GM18951 (cell line): ENCODE measurements at regions of chrX and their contacts with region 1.

Region 1: DNA sequence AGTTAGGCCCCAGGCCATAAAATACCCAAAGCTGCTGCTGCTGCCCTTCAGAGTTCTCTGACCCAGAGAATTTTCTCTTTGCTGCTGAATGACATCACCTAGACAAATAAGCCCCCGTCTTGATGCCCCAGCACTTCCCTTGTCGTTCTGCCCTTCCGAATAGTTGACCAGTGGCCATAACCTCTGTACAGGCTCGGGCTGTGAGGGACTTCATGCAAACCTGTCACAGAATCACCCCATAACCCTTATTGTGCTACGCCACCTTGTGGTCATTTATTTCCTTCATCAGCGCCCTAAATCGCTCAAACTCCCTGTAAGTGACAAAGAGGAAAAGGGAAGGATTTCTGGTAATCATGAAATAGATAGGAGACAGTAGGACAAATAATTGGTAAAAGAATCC is 18.8 kb downstream of the SPACA5 start:
- POLR2A ChIP-seq: no peak

Region 2: DNA sequence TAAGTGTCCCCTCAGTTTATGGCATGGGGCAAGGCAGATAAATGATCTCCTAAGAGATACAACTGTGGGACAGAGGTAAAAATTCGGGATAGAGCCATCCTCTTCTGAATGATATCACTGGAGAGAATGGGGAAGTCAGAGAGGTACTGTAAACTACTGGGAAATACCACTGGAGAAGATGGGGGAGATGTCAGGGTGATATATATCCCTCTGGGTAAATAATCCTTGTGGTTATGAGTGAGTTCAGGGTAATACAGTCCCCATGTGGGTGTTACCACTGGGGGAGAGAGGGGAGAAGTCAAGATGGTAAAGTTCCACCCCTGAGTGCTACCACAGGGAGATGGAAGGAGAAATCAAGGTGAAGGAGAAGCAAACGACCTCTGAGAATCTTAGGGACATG is 252.8 kb before region 1 on chrX:
- in situ Hi-C with region 1: no loop called
- POLR2A ChIP-seq: no peak

Region 3: DNA sequence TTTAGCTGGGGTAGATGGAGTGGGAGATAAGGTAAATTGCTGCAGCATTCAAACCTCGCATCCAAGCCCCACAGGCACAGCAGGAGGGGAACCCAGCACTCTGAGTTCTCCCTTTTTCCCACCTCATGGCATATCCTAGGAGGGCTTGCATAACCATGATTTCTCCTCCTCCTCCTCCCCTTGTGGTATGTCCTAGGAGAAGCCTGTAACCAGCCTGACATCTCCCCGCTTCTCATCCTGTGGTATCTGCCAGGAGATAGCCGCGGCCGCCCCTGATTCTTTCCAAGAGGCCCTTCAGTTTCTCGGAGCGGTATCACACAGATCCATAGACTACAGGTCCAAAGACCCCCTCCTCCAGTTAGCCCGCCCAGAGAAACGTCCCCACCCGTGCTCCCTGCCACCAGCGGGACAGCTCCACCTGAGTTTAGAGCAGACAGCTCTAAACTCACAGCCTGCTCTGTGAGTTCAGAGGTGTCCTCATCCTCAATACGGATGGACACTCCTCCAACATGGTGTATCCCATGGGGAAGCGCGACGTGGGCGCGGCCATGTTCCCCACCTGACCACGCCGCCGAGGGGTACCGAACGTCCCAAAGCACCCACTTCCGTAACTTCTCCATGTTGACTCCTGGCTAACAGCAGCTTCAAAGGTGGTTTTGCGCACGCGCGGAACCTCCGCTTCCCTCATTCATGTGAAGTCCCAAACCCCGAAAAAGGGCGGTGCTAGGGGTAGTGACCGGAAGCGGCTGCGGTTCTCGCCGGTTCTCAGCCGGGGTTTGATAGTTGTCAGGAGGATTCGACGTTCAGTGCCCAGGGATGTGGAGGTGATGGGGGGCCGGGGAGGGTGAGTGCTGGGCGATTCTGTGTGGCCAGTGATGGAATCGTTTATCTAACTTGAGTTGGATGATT is 189.1 kb before region 1 on chrX and contains the start of gene ZNF81:
- in situ Hi-C with region 1: loop called (anchors 25 kb)
- POLR2A ChIP-seq: peak; percentile 65